ENCODE measurements at regions of chr12 and their contacts with region 1.

Region 1: GRCh38 chr12:51047655-51048540 is at the start of gene LETMD1:
- DNase-seq: peak; percentile 95
- CTCF ChIP-seq: peak; percentile 92

Region 2: GRCh38 chr12:51270067-51270970 is 222.4 kb after region 1 on chr12 and contains the start of gene SMAGP:
- in situ Hi-C with region 1: no loop called
- DNase-seq: peak; percentile 84
- CTCF ChIP-seq: no peak

Region 3: DNA sequence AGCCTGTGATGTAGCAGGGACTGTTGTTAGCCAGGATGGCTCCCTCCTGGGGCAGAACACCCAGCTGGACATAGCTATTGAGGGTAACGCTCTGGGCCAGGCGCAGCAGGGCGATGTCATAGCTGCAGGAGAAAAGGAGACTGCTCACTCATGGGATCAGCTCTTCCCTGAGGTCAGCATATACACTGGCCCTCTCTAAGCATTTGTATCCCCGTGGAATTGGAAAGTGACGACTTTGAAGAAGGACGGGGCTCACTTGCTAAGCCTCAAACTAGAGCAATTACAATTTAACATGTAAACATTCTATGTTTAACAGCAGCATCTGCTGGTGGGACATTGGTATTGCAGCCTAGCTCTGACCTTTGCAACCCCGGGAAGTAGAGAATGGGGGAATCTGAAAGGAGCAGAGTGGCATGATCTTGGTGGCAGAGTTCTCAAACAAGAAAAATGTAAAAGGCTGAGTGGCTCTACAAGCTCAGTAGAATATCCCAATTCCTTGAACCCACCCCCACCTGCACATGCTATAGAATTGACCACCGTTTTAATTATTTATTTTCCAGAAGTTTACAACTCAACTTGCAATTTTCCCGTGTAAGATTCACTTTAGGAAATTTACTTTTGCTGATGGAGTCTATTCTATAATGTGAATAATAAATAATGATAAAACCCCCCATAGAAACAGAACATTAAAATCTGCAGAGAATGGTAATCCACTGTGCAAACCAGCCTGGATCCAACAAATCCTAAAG is 293.5 kb after region 1 on chr12:
- in situ Hi-C with region 1: loop called (anchors 5 kb)
- DNase-seq: peak; percentile 75
- CTCF ChIP-seq: peak; percentile 96